ENCODE measurements at regions of chr3 and their contacts with region 1.

Region 1: GRCh38 chr3:94049267-94049666 is 13.4 kb downstream of the DHFR2 start:
- DNase-seq: no peak
- H3K4me3 ChIP-seq: no peak overlapping the region
- H3K27ac ChIP-seq: no peak overlapping the region
- H3K4me1 ChIP-seq: no peaks in the 10 kb centered on the region
- H3K27me3 ChIP-seq: no peaks in the 10 kb centered on the region
- CTCF ChIP-seq: no peak

Region 2: GRCh38 chr3:93961489-93961888 is 87.8 kb before region 1 on chr3:
- CTCF ChIA-PET with region 1: no interaction called
- POLR2A ChIA-PET with region 1: no interaction called
- intact Hi-C with region 1: no loop called
- DNase-seq: no peak
- H3K4me3 ChIP-seq: no peak overlapping the region
- H3K27ac ChIP-seq: no peak overlapping the region
- H3K4me1 ChIP-seq: no peaks in the 10 kb centered on the region
- H3K27me3 ChIP-seq: peaks cover 49% of the 10 kb centered on the region
- CTCF ChIP-seq: no peak

Region 3: DNA sequence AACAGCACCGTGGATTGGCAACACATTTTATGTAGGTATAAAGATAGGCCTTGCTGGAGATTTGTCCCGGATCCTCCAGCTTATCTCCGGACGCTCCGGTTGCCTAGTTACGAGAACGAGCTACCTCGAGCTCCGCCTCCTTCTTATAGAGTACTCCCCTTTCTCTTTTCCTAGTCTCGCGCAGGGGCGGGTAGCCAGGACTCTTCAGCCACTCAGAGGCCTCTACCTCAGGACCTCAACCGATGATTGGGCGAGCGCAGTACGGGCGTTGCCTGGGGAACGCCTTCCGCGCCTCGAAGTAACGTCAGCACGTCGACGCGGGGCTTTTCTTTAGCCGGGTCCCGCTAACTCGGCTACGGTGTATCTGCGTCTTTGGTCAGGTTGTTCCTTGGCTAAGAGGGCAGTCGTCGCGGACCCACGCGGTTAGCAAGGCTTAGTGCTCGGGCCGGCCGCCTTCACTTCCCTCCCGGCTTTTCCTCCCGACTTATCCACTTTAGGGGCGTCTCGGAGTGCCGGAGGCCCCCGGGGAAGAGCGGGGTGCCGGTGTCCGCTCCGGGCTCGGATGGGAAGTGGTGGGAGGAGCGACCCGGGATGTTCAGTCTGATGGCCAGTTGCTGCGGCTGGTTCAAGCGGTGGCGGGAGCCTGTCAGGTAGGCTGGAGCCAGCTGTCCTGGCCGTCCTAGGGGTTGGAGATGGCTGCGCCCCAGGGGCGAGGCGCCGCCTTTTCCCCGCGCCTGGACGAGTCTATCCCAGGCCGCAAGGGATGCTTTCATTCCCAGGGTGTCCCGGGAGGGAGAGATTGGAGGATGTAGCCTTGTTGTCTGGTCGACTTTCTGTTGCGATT is 69.2 kb before region 1 on chr3 and contains the start of gene ARL13B:
- CTCF ChIA-PET with region 1: no interaction called
- POLR2A ChIA-PET with region 1: no interaction called
- intact Hi-C with region 1: no loop called
- DNase-seq: peak; percentile 98 to 100
- H3K4me3 ChIP-seq: peak within 1 kb of the TSS; percentile 74
- H3K27ac ChIP-seq: peak within 1 kb of the TSS; percentile 14; the same call in 1 of the 2 replicates
- H3K4me1 ChIP-seq: peaks cover 14% of the 10 kb centered on the region
- H3K27me3 ChIP-seq: no peaks in the 10 kb centered on the region
- CTCF ChIP-seq: no peak
- total RNA-seq, gene ARL13B: 17.8 and 20.2 TPM in 2 replicates

Region 4: DNA sequence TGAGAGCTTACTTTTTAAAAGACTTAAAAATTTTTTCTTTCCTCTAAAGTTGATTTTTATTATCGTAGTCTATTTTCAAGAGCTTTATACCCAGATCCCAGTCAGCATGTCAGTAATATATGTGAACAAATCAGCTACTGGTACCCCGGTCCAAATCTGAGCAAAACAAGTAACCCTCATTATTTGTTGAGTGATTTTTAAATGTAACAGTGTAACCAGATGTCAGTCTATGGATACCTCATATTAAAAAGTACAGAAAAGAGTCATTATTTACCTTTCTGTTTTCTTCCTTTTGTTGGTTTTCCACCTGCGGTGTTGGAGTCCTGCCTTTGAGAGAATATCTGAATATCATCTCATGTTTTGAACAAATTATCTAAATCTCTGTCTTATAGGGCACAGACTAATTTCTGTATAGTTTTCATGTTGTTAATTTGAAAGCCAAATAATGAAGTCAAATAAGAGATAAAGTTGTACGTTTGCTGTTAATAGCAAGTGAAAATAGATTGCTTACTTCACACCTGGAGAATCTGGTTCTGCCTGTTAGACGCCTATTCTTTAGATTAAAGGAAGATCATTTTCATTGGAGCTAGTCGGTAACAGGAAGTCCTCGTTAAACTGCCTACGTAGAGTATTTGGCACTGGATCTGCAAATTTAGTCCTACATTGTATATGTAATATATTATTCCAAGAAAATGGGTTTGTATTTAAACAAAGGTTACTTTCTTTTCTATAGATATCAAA is 21.0 kb before region 1 on chr3 and contains the start of gene STX19:
- CTCF ChIA-PET with region 1: no interaction called
- POLR2A ChIA-PET with region 1: no interaction called
- intact Hi-C with region 1: no loop called
- DNase-seq: peak; percentile 19 to 96
- H3K4me3 ChIP-seq: peak within 1 kb of the TSS; percentile 56
- H3K27ac ChIP-seq: peak within 1 kb of the TSS; percentile 60
- H3K4me1 ChIP-seq: peaks cover 18% of the 10 kb centered on the region
- H3K27me3 ChIP-seq: no peaks in the 10 kb centered on the region
- CTCF ChIP-seq: no peak
- total RNA-seq, gene STX19: 3.4 and 5.5 TPM in 2 replicates

Region 5: GRCh38 chr3:94101851-94102250 is 52.6 kb after region 1 on chr3:
- CTCF ChIA-PET with region 1: no interaction called
- POLR2A ChIA-PET with region 1: no interaction called
- intact Hi-C with region 1: loop called (anchors 10 kb)
- DNase-seq: peak in 1 of 2 experiments; percentile 34
- H3K4me3 ChIP-seq: no peak overlapping the region
- H3K27ac ChIP-seq: no peak overlapping the region
- H3K4me1 ChIP-seq: no peaks in the 10 kb centered on the region
- H3K27me3 ChIP-seq: no peaks in the 10 kb centered on the region
- CTCF ChIP-seq: peak; percentile 48

Region 6: DNA sequence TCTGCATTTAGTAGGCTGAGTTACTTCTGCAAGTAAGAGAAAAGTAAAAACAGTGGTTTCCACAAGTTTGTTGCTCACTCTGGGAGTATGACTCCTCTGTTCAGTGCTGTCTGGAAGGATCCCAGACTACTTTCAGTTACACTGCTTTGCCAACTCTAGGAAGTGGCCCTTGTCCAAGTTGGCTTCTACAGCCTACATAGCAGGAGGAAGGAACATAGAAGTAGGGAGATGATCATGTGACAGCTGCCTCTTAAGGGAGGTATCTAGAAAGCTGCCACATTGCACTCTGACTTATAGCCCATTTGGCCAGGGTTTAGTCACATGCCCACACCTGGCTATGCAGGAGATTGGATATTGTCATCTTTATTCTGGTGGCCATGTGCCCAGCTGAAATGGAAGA is 311.7 kb after region 1 on chr3:
- CTCF ChIA-PET with region 1: no interaction called
- POLR2A ChIA-PET with region 1: no interaction called
- intact Hi-C with region 1: no loop called
- DNase-seq: peak in 1 of 2 experiments; percentile 24
- H3K4me3 ChIP-seq: no peak overlapping the region
- H3K27ac ChIP-seq: no peak overlapping the region
- H3K4me1 ChIP-seq: no peaks in the 10 kb centered on the region
- H3K27me3 ChIP-seq: no peaks in the 10 kb centered on the region
- CTCF ChIP-seq: no peak